H1 (cell line): ENCODE measurements at regions of chr14 and their contacts with region 1.

Region 1: GRCh38 chr14:22781586-22781991 is 15.1 kb downstream of the OXA1L start:
- DNase-seq: no peak
- H3K4me3 ChIP-seq: no peak overlapping the region
- H3K27ac ChIP-seq: no peak overlapping the region
- H3K4me1 ChIP-seq: no peaks in the 10 kb centered on the region; a peak in 1 of 7 replicates
- H3K27me3 ChIP-seq: no peaks in the 10 kb centered on the region
- CTCF ChIP-seq: no peak
- EP300 ChIP-seq: no peak
- POLR2A ChIP-seq: no peak
- RAD21 ChIP-seq: no peak

Region 2: DNA sequence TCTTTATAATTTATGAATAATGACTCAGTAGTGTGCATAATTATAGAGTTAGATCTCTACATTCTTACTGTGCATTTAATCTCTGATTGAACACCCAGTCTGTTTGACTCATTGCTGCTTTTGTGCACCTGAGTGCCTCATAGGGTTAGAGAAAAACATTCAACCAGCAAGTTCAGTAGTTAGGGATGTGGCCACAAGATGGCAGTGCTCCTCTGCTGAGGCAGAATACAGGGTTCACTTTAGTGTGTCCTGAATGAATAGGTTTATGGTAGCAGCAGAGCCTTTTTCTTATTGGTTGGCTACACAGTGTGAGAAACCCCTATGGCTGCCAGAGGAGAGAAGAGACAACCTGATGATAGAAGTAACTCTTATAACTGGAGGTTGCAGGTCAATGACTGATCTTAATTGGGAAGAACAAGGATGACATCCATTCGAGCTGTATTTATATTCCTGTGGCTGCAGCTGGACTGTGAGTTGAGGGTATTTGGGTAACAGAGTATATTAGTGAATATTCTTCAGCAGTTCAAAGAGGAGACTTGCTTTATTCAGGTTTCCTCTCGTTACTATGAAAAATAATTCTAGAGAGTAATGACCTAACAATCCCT is 913.0 kb before region 1 on chr14:
- CTCF ChIA-PET with region 1: no interaction called
- POLR2A ChIA-PET with region 1: no interaction called
- DNase-seq: peak; percentile 31 to 88
- H3K4me3 ChIP-seq: no peak overlapping the region
- H3K27ac ChIP-seq: no peak overlapping the region
- H3K4me1 ChIP-seq: no peaks in the 10 kb centered on the region
- H3K27me3 ChIP-seq: no peaks in the 10 kb centered on the region
- CTCF ChIP-seq: peak in 2 of 3 experiments; percentile 82 to 92; a peak in 3 of 4 replicates
- EP300 ChIP-seq: no peak
- POLR2A ChIP-seq: no peak
- RAD21 ChIP-seq: peak; percentile 74 to 77

Region 3: DNA sequence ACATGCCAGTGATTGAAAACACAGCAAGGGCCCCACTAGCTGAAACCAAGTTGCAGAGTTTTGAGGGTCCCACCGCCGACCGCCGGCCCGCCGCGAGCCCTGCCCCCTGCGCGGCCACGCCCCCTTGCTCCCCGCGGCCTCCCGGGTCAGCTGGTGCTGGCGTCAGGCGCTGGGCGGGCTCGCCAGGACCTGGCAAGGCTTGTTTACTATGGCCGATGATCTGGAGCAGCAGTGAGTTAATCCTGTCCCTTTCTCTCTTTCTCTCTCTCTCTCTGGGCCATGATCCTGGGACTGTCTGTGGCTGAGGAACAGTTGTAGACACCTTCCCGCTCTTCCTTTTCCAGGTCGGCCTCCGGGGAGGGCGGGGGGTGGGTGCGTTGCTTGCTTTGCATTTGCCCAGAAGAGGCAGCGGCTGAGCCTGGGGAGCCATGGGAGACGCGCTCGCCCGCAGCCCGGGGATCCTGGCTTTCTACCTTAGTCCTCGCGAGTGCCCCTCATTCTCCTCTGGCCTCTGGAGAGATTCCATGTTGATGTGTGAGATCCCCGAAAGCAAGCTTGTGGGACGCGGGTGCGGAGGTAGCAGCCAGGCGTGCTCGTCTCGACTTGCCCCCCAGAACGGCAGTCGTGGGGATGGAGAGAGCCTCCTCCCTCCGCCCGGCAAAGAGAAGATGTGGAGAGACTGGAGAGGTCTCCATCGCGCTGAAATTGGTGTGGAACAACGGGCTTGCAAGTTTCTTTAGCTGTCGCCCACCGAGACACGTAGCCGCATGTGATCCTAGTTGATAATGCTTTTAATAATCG is 183.3 kb before region 1 on chr14 and contains the start of gene ABHD4:
- CTCF ChIA-PET with region 1: no interaction called
- POLR2A ChIA-PET with region 1: no interaction called
- DNase-seq: peak in 1 of 2 experiments; percentile 92
- H3K4me3 ChIP-seq: peak within 1 kb of the TSS; percentile 68 to 99 (median 84)
- H3K27ac ChIP-seq: peak within 1 kb of the TSS; percentile 77
- H3K4me1 ChIP-seq: peaks cover 0 to 10% (median 6%) of the 10 kb centered on the region in 4 experiments; a peak in 4 of 7 replicates
- H3K27me3 ChIP-seq: no peaks in the 10 kb centered on the region
- CTCF ChIP-seq: no peak
- EP300 ChIP-seq: 0 out of 3 replicates have a peak, but pooled peaks of 1 of the 2 experiments have one; percentile 31
- POLR2A ChIP-seq: peak; percentile 60 to 78; a peak in 2 of 3 replicates
- RAD21 ChIP-seq: no peak
- total RNA-seq, gene ABHD4: 32.4 and 37.1 TPM in 2 replicates

Region 4: DNA sequence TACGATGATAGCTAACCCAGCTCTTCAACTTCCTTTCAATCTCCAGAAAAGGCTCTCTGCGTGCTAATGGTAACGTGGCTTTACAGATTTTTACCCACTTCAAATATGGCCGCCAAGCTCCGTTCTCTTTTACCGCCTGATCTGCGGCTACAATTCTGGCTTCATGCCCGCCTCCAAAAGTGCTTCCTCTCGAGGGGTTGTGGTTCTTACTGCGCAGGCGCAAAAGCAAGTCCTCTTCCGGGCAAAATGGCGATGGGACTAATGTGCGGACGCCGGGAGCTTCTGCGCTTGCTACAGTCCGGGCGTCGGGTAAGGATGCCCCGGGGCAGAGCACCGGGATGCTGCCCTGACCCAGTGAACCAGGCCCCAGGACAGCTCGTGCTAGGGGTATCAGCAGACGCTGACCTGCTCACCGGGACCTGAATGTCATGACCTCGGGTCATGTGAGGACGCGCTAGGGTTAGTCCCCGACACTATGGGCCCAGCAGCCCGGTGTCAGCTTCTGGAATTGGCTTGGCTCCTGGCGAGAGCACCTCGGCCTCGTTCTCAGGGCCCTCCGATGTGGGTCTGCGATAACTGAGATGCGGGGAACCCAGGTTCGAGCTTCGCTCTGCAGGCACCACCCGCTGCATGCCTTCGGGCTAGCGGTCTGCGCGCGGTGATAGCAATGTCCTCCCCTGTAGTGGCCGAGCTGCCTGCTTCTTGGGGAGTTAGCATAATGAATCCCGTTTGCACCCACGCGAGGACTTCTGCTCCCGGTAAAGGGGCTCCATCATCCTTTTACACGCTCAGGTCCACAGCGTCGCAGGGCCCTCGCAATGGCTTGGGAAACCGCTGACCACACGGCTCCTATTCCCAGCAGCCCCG is 14.9 kb before region 1 on chr14 and contains the start of gene OXA1L:
- CTCF ChIA-PET with region 1: interaction called, 15 read pairs
- POLR2A ChIA-PET with region 1: interaction called, 25 read pairs
- DNase-seq: peak; percentile 78 to 90
- H3K4me3 ChIP-seq: peak within 1 kb of the TSS; percentile 87 to 97 (median 94)
- H3K27ac ChIP-seq: peak within 1 kb of the TSS; percentile 91
- H3K4me1 ChIP-seq: peaks cover 0 to 2% (median 0%) of the 10 kb centered on the region in 4 experiments; a peak in 2 of 7 replicates
- H3K27me3 ChIP-seq: no peaks in the 10 kb centered on the region
- CTCF ChIP-seq: no peak
- EP300 ChIP-seq: 0 out of 3 replicates have a peak, but pooled peaks of 1 of the 2 experiments have one; percentile 13
- POLR2A ChIP-seq: peak; percentile 50 to 81; a peak in 2 of 3 replicates
- RAD21 ChIP-seq: no peak
- total RNA-seq, gene OXA1L: 125 and 129 TPM in 2 replicates